ENCODE measurements at regions of chr6 and their contacts with region 1.

Region 1: DNA sequence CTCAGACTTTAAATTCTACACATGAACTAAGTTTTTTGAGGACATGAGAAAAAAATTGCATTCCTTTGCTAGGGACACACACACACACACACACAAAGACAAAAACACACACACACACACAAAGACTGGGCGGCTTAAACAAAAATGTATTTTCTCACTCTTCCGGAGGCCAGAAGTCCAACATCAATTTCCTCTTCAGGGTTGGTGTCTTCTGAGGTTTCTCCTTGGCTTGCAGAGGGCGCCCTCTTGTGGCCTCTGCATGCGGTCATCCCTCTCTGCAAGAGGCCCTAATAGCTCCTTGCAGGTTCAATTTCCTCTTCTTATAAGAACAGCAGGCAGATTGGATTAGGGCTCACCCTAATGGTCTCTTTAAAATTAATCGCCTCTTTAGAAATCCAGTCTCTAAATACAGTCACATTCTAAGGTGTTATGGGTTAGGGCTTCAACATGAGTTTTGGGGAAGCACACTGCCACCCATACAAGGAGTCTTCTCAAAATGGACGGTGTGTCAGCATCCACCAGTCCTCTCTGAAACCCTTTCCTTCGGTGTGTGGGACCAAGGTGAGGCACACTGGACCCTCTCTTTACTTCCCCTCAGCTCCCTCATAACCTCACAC is 61.4 kb downstream of the GPR6 start:
- DNase-seq: peak; percentile 91 to 92
- ATAC-seq: peak; percentile 90
- H3K4me3 ChIP-seq: no peak overlapping the region
- H3K27ac ChIP-seq: no peak overlapping the region
- H3K4me1 ChIP-seq: no peaks in the 10 kb centered on the region
- H3K27me3 ChIP-seq: no peaks in the 10 kb centered on the region

Region 2: DNA sequence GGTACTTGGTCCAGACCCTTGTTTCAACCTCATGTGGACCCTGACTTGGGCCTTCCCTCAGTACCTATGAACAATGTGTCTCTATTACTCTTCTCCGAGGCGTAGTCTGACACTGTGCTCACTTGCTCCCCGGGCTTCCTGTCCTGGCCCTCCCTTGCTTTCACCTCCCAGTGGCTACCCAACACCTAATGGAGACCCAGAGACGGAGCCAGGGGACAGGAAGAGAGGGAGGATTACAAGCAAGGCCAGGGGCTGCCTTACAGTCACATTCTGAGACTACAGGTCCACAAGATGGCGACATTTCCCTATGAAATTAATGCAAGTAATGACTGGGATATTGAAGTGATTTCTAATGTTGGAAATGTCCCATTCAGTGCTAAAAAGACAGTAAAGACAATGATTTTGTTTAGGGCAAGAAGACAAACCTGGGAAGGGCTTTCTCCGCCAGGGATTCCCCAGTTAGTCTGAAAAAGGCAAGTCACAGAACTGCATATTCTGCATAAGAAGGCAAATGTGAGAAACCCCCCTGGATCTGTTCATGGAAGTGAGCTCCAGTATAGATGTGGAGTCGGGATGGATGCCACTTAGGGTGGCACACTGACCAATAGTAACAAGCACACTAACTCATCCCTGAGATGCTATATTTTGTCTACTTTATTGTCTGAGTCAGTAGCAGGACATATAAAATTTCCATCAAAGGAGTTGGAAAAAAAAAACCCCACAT is 512.4 kb before region 1 on chr6:
- intact Hi-C with region 1: loop called in 1 of 2 experiments (anchors 5 kb)
- DNase-seq: peak in 1 of 2 donors; percentile 53
- ATAC-seq: peak; percentile 74
- H3K4me3 ChIP-seq: no peak overlapping the region
- H3K27ac ChIP-seq: no peak overlapping the region
- H3K4me1 ChIP-seq: no peaks in the 10 kb centered on the region
- H3K27me3 ChIP-seq: no peaks in the 10 kb centered on the region

Region 3: DNA sequence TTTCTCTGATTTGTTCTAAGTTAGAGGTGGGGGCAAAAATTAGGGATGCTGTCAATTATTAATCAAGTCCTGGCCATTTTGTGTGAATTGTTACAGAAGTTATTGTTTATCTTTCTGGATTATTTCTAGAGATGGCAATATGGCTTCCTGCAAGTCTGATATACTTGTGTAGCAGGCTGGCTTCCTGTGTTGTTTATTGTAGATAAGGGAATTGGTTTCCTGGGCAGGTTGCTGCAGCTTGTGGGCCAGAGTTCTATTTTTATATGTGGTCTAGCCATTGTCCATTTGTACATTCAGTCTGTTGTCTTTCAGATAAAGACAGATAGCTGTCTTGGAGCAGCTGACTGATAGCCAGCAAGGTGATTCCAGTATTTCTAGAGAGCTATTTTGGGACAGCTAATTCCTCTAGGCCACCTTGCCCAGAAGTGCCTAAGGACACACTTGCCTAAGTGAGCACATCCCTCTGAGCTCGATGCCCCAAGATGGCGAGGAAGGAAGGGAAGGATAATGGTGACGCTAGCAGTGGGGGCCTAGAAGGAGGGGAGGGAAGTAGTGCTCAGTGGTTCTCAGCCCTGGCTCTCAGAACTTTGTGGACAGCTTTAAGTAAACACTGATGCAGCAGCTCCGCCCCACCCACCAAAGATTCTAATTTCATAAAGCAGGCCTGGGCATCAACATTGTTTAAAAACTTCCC is 350.4 kb after region 1 on chr6:
- intact Hi-C with region 1: loop called in 1 of 2 experiments (anchors 5 kb)
- DNase-seq: no peak
- ATAC-seq: no peak
- H3K4me3 ChIP-seq: no peak overlapping the region
- H3K27ac ChIP-seq: no peak overlapping the region
- H3K4me1 ChIP-seq: no peaks in the 10 kb centered on the region
- H3K27me3 ChIP-seq: no peaks in the 10 kb centered on the region